ENCODE measurements at regions of chr1 and their contacts with region 1.

Region 1: GRCh38 chr1:112144733-112145426 is 155.4 kb upstream of the KCND3 start:
- DNase-seq: no peak
- ATAC-seq: peak; percentile 88

Region 2: GRCh38 chr1:111801071-111801841 is 343.6 kb before region 1 on chr1:
- intact Hi-C with region 1: loop called (anchors 5 kb)
- DNase-seq: peak; percentile 55
- ATAC-seq: peak; percentile 90

Region 3: DNA sequence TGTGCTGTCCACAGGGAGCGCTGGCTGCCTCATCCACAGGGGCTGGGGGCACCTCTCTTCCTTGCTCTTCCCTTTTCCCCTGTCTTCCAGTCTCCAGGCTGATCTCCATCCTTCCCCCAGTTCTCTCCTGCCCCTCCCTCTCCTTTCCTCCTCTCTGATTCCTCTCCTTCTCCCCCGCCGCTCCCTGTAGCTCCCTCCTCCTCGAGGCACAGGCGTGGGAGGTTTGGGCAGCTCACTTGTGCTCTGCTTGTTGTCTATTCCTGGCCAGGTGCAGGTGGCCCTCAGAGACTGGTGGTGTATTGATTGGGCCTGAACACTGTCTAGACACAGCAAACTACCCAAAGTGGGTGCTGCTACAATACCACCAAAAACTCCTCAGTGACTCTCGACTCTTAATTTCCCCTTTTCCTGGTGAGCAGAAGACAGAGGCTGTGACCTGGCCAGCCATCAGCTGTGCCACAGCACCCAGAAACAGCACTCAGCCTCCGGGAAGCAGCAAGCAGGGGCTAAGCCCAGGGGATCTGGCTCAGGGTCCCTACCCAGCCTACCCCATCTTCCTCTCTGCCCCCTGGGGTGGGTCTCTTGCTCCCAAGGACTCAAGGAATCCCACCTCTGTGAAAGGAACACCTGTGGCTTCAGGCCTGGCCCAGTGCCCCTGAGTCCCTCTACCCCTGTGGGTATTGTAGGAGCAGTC is 295.9 kb before region 1 on chr1:
- intact Hi-C with region 1: loop called (anchors 5 kb)
- DNase-seq: no peak
- ATAC-seq: no peak

Region 4: DNA sequence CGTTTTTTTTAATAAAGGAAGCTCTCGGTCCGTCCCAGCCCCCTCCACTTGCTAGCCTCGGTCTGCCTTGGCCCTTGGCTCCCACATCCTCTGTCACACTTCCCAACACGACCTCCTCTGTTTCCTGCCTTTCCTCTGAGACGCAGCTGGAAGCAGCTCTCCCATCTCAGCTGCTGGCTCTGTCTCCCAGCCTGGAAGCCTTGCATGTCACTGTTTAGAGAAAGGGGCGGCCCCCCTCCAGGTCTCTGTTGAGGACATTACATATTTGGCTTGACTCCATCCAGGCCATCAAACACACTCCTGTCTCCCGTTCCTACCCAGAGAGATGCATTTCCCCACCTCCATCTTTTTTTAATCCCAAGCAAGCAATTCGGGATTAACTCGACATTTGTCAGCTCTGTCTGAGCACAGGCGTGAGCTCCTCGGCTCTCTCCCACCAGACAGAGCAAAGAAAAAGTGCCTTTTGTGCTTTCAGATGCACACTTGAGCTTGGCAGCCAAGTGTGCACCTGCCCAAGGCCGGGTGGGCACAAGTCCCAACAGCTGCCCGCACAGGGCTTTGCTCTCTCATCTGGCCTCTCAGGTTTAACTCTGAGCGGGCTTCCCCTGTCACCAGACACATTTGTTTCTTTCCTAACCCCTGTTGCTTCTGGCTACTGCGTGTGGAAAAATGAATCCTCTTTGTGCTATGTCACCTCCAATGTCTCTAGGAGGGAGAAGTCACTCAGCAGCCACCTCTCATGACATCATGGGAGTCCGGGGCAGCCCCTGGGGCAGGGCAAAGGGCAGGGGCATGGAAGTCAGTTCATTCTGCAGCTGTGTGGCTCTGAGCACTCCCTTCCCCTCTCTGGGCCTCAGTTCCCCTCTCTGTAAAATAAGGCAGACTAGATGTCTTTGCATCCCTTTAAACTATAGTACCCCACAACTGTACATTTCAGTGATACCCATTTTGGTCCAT is 263.7 kb before region 1 on chr1:
- intact Hi-C with region 1: loop called (anchors 10 kb)
- DNase-seq: peak; percentile 69
- ATAC-seq: peak; percentile 56

Region 5: DNA sequence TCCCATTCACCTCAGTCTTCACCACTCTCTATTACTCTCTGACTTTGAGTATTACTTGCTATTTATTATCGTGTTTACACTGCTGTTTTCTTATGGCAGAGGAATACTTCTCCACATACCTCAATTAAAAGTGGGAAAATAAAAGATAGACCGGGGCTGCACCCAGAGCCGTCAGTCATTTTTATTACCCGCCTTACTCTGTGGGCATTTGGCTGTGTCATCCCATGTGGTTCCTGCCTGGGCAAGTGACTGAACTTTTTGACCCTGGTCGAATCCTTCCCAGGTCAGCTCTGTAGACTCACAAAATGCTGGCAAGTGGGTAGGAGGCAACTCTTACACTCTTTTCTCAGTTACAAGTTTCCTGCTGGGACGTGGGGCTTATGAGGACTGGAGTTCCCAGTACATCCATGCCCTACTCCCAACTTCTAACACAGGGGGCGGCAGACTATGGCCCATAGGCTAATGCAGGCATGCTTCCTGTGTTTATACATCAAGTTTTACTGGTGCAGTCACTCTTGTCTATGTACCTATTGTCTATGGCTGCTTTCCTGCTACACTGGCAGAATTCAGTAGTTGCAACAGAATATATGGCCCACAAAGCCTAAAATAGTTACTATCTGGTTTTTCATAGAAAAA is 85.9 kb before region 1 on chr1:
- intact Hi-C with region 1: loop called (anchors 2 kb)
- DNase-seq: no peak
- ATAC-seq: no peak

Region 6: DNA sequence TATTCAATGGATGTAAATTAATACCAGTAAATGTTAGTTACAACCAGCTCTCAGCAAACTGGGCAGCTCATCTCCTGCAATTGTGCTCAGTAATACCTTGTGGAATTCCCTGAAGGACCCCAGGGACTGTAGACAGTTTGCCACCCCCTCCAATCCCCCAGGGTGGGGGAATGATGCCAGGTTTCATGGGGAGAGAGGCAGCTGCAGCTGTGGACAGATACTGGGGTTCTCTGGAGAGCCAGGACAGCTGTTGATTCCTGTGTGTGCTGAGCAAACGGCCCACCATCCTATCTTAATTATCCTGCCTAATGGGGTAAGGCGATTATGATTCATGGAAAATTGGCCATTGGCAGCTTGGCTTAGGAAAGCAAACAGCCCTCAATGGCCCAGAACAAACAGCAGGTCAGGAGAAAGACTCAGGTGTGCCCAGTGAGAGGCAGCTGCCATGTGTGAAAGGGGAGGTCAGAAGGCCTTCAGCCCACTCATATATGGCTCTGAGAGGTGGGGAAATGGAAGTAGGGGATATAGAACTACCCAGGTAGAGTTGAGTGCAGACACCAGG is 102.2 kb after region 1 on chr1:
- intact Hi-C with region 1: loop called (anchors 5 kb)
- DNase-seq: no peak
- ATAC-seq: no peak